PC-9 (cell line): ENCODE measurements at regions of chr7 and their contacts with region 1.

Region 1: GRCh38 chr7:12475362-12476063 is 71.8 kb upstream of the VWDE start:
- DNase-seq: peak in 1 of 2 experiments; percentile 51
- H3K4me3 ChIP-seq: no peak overlapping the region
- H3K27ac ChIP-seq: no peak overlapping the region
- H3K4me1 ChIP-seq: peaks cover 6% of the 10 kb centered on the region; the same call in 1 of the 2 replicates
- H3K27me3 ChIP-seq: no peaks in the 10 kb centered on the region
- CTCF ChIP-seq: no peak

Region 2: DNA sequence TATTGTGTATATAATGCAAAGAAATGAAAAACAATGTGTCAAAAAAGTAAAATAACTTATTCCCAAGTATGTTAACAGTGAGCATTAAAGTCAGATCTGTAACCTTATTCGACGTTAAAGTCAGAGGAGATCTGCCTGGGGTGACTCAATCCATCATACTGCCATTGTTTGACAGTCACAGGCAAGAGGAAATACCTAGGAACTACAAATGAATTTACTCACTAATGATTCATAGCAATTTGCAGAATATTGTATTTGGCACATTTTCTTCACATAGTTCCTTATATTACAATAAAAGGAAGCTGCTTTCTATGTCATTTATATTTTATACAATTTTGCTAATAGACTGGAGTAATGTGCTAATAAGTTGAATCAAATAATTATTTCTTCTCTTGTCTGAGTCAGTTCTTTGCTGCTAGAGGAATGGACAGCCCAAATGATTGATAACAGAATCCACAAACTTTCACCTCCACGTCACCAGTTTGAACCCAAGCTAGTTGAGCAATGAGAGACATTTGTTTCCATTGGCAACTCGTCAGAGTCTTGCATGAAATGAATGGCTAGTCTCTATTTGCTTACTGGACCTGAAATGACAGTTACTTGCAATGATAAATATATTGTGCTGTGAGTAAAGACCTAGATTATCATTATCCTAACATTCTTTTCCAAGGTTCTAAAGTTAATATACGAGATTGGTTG is 312.9 kb before region 1 on chr7:
- CTCF ChIA-PET with region 1: no interaction called
- POLR2A ChIA-PET with region 1: no interaction called
- intact Hi-C with region 1: no loop called
- DNase-seq: peak; percentile 19 to 83
- H3K4me3 ChIP-seq: no peak overlapping the region
- H3K27ac ChIP-seq: peak overlapping the region; percentile 55
- H3K4me1 ChIP-seq: peaks cover 29% of the 10 kb centered on the region
- H3K27me3 ChIP-seq: no peaks in the 10 kb centered on the region
- CTCF ChIP-seq: no peak

Region 3: GRCh38 chr7:12211054-12211710 is 264.3 kb before region 1 on chr7 and contains the start of gene TMEM106B:
- CTCF ChIA-PET with region 1: no interaction called
- POLR2A ChIA-PET with region 1: no interaction called
- intact Hi-C with region 1: no loop called
- DNase-seq: peak; percentile 93 to 98
- H3K4me3 ChIP-seq: peak within 1 kb of the TSS; percentile 74
- H3K27ac ChIP-seq: peak within 1 kb of the TSS; percentile 92
- H3K4me1 ChIP-seq: peaks cover 24% of the 10 kb centered on the region
- H3K27me3 ChIP-seq: no peaks in the 10 kb centered on the region
- CTCF ChIP-seq: peak; percentile 44; the same call in 1 of the 2 replicates
- total RNA-seq, gene TMEM106B: 61.1 and 64.4 TPM in 2 replicates

Region 4: DNA sequence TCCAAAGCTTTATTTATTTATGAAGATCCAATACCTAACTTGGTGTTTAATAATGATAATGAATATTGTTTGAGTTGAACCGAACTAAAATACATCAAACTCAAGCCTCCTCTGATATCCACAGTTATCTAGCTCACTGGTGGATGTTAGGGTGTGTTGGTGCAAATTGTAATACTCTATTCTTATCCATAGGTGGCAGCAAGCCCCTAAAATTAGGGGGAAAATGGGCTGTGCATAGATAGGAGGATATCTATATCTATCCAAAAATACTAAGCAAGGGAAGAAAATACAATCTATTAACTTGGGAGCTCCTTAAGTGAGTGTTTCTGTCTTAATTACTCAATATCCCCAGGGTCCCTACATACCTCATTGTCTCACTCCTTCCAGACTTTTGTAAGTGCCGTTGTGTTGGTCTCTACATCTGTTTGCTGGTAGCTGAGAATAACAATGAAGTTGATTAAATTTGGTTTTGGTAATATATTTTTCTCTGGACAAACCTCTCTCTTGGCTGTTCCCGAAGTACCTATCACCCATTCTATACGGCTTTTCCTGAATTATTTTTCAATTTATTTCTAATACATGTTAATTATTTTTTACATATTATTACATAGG is 16.9 kb before region 1 on chr7:
- CTCF ChIA-PET with region 1: interaction called, 10 read pairs
- POLR2A ChIA-PET with region 1: no interaction called
- intact Hi-C with region 1: no loop called
- DNase-seq: peak; percentile 17 to 39
- H3K4me3 ChIP-seq: no peak overlapping the region
- H3K27ac ChIP-seq: no peak overlapping the region
- H3K4me1 ChIP-seq: peaks cover 4% of the 10 kb centered on the region; the same call in 1 of the 2 replicates
- H3K27me3 ChIP-seq: no peaks in the 10 kb centered on the region
- CTCF ChIP-seq: peak; percentile 94

Region 5: DNA sequence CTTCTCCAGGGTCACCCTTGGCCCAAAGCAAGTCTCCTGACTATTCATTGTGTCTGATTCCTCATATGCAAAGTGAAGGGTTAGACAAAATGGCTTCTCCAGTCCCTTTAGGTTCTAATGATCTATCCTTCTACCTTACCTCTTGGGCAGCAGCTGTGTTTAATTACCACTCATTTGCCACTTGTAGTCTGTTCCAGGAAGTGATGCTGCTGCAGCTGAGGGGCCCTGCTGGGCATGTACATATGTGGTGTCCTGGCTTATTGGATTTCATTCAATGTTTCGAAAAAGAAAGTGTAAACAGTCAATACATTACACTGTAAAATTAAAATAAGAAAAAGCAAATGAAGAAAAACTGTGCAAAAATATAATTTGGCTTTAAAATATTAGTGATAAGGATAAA is 131.6 kb after region 1 on chr7:
- CTCF ChIA-PET with region 1: no interaction called
- POLR2A ChIA-PET with region 1: no interaction called
- intact Hi-C with region 1: no loop called
- DNase-seq: no peak
- H3K4me3 ChIP-seq: no peak overlapping the region
- H3K27ac ChIP-seq: no peak overlapping the region
- H3K4me1 ChIP-seq: no peaks in the 10 kb centered on the region
- H3K27me3 ChIP-seq: no peaks in the 10 kb centered on the region
- CTCF ChIP-seq: no peak